Esophagus squamous epithelium (tissue), 5 donors: ENCODE measurements at regions of chr2 and their contacts with region 1.

Region 1: GRCh38 chr2:102473020-102473419 is at the start of gene SLC9A4:
- DNase-seq: no peak
- H3K4me3 ChIP-seq: no peak within 1 kb of the TSS
- H3K27ac ChIP-seq: no peak within 1 kb of the TSS
- H3K4me1 ChIP-seq: peaks cover 0 to 5% (median 0%) of the 10 kb centered on the region in 3 donors
- H3K27me3 ChIP-seq: peaks cover 0 to 28% (median 0%) of the 10 kb centered on the region in 4 donors
- CTCF ChIP-seq: peak in 5 of 6 experiments; percentile 76 to 90 (median 84)
- POLR2A ChIP-seq: no peak
- total RNA-seq, gene SLC9A4: 0.40 to 0.76 (median 0.47) TPM

Region 2: GRCh38 chr2:102551329-102552096 is 78.5 kb after region 1 on chr2:
- intact Hi-C with region 1: no loop called
- DNase-seq: no peak
- H3K4me3 ChIP-seq: no peak overlapping the region
- H3K27ac ChIP-seq: no peak overlapping the region
- H3K4me1 ChIP-seq: no peaks in the 10 kb centered on the region
- H3K27me3 ChIP-seq: no peaks in the 10 kb centered on the region
- CTCF ChIP-seq: no peak
- POLR2A ChIP-seq: no peak

Region 3: DNA sequence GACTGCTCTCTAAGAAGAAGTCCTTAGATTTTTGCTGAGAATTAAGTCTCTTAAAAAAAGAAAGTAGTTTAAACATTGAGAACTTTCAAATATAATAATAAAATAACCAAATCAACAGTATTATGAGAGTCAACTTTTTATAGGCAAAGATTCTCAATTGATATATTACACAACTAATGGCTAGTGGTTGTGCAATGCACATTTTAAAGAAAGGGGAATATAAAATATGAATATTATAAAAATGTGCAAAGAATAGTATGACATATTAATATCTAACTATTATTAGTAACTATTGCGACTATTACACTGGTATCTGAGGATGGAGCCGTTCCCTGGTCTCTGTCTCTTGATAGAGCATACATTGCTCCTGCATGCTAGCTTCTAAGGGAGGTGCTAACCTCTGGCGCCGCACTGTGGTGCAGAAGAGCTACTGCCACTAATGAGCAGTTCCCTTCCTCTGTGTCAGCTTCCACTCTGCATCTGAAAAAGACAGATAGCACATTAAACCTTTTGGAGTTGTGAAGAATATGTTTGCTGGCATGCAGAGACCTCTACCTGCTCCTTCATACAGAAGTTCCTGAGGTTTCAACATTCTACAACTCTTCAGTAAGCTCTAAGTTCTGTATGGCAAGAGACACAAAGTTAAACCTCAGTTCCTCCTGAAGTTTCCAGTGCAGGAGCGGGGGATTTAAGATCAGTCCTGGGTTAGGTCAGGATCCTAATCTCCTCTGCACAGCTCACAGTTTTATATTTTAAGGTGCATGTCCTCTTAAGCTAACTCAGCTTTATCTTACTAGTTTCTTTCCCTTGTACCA is 142.8 kb after region 1 on chr2:
- intact Hi-C with region 1: loop called (anchors 10 kb)
- DNase-seq: no peak
- H3K4me3 ChIP-seq: no peak overlapping the region
- H3K27ac ChIP-seq: no peak overlapping the region
- H3K4me1 ChIP-seq: peaks cover 14 to 23% (median 17%) of the 10 kb centered on the region in 3 donors
- H3K27me3 ChIP-seq: peaks cover 3 to 87% (median 5%) of the 10 kb centered on the region in 4 donors
- CTCF ChIP-seq: peak in 5 of 6 experiments; percentile 71 to 91 (median 80)
- POLR2A ChIP-seq: no peak